ENCODE measurements at regions of chr9 and their contacts with region 1.

Region 1: GRCh38 chr9:122991370-122991830 is 42.1 kb upstream of the GPR21 start:
- DNase-seq: peak in 5 of 10 donors; percentile 27 to 66 (median 36)
- H3K4me3 ChIP-seq: no peak overlapping the region
- H3K27ac ChIP-seq: peak overlapping the region in 18 of 59 donors; percentile 0 to 60 (median 16)
- H3K27me3 ChIP-seq: no peaks in the 10 kb centered on the region
- CTCF ChIP-seq: peak; percentile 51 to 88 (median 78)

Region 2: DNA sequence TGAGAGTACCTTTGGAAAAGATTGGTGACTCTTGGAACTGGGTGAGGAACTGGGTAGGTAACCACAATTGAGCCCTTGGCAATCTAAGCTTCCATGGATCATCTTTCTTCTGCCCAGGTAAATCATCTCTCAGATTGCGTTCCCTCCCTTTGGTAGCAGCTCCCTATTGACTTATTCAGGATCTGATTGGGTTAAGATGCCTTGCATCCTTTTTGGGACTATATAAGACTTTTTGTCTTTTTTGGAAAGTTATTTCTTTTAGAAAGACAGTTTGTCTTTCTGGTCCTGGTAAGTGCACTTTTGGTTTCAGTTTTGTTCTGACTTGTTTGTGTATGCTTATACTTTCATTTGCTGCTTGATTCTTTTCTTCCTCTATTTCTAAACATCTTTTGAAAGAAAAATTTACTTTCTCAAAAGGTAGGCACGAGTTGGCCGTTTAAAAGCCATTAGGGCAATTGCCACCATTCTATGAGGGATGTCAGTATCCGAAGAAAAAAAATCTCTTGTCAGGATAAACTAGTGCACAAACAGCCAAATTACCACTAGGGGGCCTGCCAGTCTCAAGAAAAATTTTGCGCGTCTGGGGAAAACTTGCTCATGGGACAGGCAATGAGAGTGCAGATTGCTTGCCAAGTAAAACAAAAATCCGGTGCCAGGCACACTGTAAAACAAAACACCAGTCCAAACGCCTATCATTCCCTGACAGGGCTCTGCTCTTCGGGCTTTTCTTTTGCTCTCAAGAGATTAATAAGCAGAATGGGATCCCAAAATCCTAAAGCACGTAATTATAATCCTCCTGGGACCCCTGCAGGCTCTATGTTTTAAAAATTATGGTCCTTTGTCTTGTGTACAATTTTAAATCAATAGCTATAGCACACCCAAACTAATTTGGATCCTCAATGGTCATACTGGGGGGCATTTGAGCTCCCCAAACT is 526.5 kb before region 1 on chr9:
- intact Hi-C with region 1: loop called in 1 of 2 experiments (anchors 5 kb)
- DNase-seq: peak; percentile 36 to 83 (median 69)
- H3K4me3 ChIP-seq: peak overlapping the region in 56 of 59 donors; percentile 18 to 67 (median 47)
- H3K27ac ChIP-seq: peak overlapping the region in 3 of 59 donors; percentile 3 to 64 (median 18)
- H3K27me3 ChIP-seq: no peaks in the 10 kb centered on the region
- CTCF ChIP-seq: peak; percentile 72 to 96 (median 89)

Region 3: GRCh38 chr9:122835313-122835731 is 156.1 kb before region 1 on chr9:
- intact Hi-C with region 1: loop called in 1 of 2 experiments (anchors 5 kb)
- DNase-seq: peak in 1 of 10 donors; percentile 80
- H3K4me3 ChIP-seq: no peak overlapping the region
- H3K27ac ChIP-seq: no peak overlapping the region
- H3K27me3 ChIP-seq: no peaks in the 10 kb centered on the region
- CTCF ChIP-seq: peak in 1 of 56 donors; percentile 21

Measured in dorsolateral prefrontal cortex (tissue), 120 donors.